ENCODE measurements at regions of chr9 and their contacts with region 1.

Region 1: DNA sequence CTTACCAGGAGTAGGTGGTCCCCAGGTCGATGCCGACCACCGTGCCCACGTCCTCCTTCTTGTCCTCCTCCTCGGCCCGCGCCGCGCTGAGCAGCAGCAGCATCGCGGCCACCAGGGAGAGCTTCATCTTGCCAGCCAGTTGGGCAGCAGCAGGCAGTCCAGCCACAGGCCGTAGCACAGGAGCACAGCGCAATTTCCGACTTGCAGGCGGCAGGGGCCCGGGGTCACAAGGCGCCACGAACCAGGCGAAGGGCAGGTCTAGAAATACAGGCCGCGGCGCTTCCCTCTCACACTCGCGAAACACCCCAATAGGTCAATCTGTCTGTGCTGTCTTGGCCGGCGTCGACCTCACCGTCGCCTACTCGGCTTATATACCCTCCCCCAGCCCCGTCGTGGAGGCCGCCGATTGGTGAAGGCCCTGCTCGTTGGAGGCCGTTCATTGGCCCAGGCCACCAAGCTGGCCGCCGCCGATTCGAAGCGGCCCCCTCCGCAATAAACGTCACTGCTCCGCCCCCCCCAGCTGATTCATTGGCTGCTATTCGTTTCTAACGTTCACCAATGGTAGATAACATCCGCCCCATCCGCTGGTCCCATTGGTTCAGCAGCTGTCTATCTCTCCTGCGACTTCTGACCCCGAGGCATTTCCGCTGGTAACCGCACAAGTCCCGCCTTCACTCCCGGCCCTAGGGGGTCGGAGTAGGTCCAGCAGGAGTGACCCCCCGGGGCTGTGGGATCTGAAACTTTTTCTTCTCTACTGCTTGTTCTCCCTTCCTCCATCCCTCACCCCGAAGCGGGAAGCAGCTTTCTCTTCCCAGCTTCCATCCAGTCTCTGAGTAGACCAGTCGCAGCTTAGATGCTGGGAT is at the start of gene HSPA5:
- DNase-seq: peak; percentile 97
- H3K4me3 ChIP-seq: peak within 1 kb of the TSS; percentile 83 to 100
- H3K27ac ChIP-seq: peak within 1 kb of the TSS; percentile 90 to 94
- H3K4me1 ChIP-seq: peaks cover 20 to 36% of the 10 kb centered on the region in 2 experiments
- H3K27me3 ChIP-seq: no peaks in the 10 kb centered on the region
- CTCF ChIP-seq: no peak; the same call in 1 of the 2 replicates
- EP300 ChIP-seq: peak in 1 of 2 experiments; percentile 18; a peak in 1 of 4 replicates
- RAD21 ChIP-seq: no peak
- polyA plus RNA-seq, gene HSPA5: 226 and 239 TPM in 2 replicates

Region 2: DNA sequence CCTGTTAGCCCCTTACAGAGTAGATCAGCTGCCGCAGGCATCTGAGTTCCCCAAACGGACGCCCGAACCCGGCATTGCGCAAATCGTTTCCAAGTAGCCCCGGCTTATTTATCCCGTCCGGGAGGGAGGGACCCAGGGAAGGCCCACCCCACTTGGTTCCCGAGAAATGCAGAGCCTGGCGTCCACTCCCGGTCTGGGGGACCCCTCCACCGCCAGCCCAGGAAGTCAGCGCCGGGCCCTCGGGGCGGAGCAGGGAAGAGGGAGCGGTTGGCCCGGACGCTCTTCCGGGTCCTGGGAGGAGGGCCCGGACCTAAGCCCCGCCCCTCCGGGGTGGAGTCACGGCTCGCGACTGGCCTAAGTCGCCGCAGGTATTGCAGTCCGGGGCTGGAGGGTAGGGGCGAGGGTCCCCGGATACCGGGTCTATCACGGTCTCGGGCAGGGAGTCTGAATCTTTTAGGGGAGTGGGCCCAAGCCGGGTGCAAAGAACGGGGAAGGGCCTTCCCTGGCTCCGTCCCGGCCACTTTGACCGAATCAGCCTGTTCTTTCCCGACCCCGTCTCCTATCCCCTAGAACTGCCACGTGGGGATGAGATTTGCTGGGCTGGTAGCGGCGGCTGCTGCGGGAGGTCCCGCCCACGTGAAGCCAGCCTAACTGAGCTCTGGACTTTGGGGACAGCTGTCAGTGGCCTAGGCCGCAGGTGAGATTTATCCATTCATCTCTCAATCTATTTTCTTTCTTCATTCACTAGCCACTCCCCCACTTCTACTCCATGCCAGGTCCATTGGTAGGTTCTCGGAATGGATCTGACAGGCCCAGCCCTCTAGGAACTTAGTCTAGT is 40.8 kb before region 1 on chr9 and contains the start of gene RABEPK:
- CTCF ChIA-PET with region 1: interaction called, 3 read pairs
- POLR2A ChIA-PET with region 1: interaction called, 18 read pairs
- DNase-seq: peak; percentile 96
- H3K4me3 ChIP-seq: peak within 1 kb of the TSS; percentile 63 to 83
- H3K27ac ChIP-seq: peak within 1 kb of the TSS; percentile 94
- H3K4me1 ChIP-seq: peaks cover 0 to 3% of the 10 kb centered on the region in 2 experiments; a peak in 1 of 4 replicates
- H3K27me3 ChIP-seq: no peaks in the 10 kb centered on the region
- CTCF ChIP-seq: no peak
- EP300 ChIP-seq: no peak
- RAD21 ChIP-seq: no peak
- polyA plus RNA-seq, gene RABEPK: 55.1 and 62.1 TPM in 2 replicates

Region 3: GRCh38 chr9:125255781-125256391 is 14.7 kb after region 1 on chr9:
- CTCF ChIA-PET with region 1: interaction called, 8 read pairs
- POLR2A ChIA-PET with region 1: interaction called, 35 read pairs
- DNase-seq: peak; percentile 67
- H3K4me3 ChIP-seq: no peak overlapping the region
- H3K27ac ChIP-seq: no peak overlapping the region
- H3K4me1 ChIP-seq: no peaks in the 10 kb centered on the region
- H3K27me3 ChIP-seq: no peaks in the 10 kb centered on the region
- CTCF ChIP-seq: peak; percentile 60
- EP300 ChIP-seq: no peak
- RAD21 ChIP-seq: peak; percentile 76

Region 4: GRCh38 chr9:125261501-125262293 is 20.5 kb after region 1 on chr9 and contains the start of gene GAPVD1:
- CTCF ChIA-PET with region 1: interaction called, 6 read pairs
- POLR2A ChIA-PET with region 1: interaction called, 35 read pairs
- DNase-seq: peak; percentile 99
- H3K4me3 ChIP-seq: peak within 1 kb of the TSS; percentile 82 to 99
- H3K27ac ChIP-seq: peak within 1 kb of the TSS; percentile 50 to 55; a peak in 2 of 4 replicates
- H3K4me1 ChIP-seq: no peaks in the 10 kb centered on the region; a peak in 2 of 4 replicates
- H3K27me3 ChIP-seq: no peaks in the 10 kb centered on the region
- CTCF ChIP-seq: peak; percentile 39
- EP300 ChIP-seq: no peak
- RAD21 ChIP-seq: no peak
- polyA plus RNA-seq, gene GAPVD1: 10.5 and 10.7 TPM in 2 replicates

Region 5: DNA sequence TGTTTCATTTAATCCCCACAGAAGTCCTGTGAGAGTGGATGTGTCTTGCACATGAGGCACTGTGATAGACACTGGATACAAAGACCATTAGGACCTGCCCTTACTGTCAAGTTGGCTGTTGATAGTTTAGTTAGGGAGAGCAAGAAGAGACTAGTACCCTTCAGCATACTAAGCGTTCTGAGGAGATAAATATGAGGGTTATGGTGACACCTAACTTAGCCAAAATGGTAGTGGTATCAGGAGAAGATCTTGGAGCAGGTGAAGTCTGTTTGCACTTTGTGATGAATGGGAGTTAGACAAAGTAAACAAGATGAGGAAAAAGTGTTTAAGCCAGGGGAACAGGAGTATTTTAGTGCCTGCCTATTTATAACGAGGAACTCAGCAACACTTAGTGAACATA is 67.5 kb after region 1 on chr9:
- CTCF ChIA-PET with region 1: no interaction called
- POLR2A ChIA-PET with region 1: no interaction called
- DNase-seq: no peak
- H3K4me3 ChIP-seq: no peak overlapping the region
- H3K27ac ChIP-seq: no peak overlapping the region
- H3K4me1 ChIP-seq: no peaks in the 10 kb centered on the region
- H3K27me3 ChIP-seq: no peaks in the 10 kb centered on the region
- CTCF ChIP-seq: no peak
- EP300 ChIP-seq: no peak
- RAD21 ChIP-seq: no peak

Measured in SK-N-SH (cell line).